ENCODE measurements at regions of chr9 and their contacts with region 1.

Region 1: GRCh38 chr9:4679268-4680172 is at the start of gene CDC37L1:
- DNase-seq: peak; percentile 97 to 99 (median 99)
- H3K4me3 ChIP-seq: peak within 1 kb of the TSS; percentile 72 to 80
- H3K4me3 Mint-ChIP-seq: no peak within 1 kb of the TSS
- H3K27ac ChIP-seq: peak within 1 kb of the TSS; percentile 94
- H3K27ac Mint-ChIP-seq: no peak within 1 kb of the TSS
- H3K4me1 ChIP-seq: peaks cover 36% of the 10 kb centered on the region
- H3K4me1 Mint-ChIP-seq: peaks cover 11 to 16% (median 11%) of the 10 kb centered on the region in 4 donors
- H3K27me3 ChIP-seq: no peaks in the 10 kb centered on the region
- H3K27me3 Mint-ChIP-seq: no peaks in the 10 kb centered on the region
- total RNA-seq, gene CDC37L1: 27.2 to 27.8 TPM

Region 2: GRCh38 chr9:4604678-4605095 is 74.8 kb before region 1 on chr9:
- CTCF ChIA-PET with region 1: interaction called, 3 read pairs
- POLR2A ChIA-PET with region 1: interaction called, 6 read pairs
- intact Hi-C with region 1: loop called (anchors 5 kb)
- DNase-seq: peak; percentile 59 to 72 (median 70)
- H3K4me3 ChIP-seq: no peak overlapping the region
- H3K4me3 Mint-ChIP-seq: peak overlapping the region in 3 of 8 donors; percentile 27 to 67 (median 52)
- H3K27ac ChIP-seq: no peak overlapping the region
- H3K27ac Mint-ChIP-seq: peak overlapping the region in 6 of 7 donors; percentile 4 to 85 (median 57)
- H3K4me1 ChIP-seq: peaks cover 24% of the 10 kb centered on the region
- H3K4me1 Mint-ChIP-seq: peaks cover 21 to 50% (median 25%) of the 10 kb centered on the region in 4 donors
- H3K27me3 ChIP-seq: no peaks in the 10 kb centered on the region
- H3K27me3 Mint-ChIP-seq: no peaks in the 10 kb centered on the region

Region 3: DNA sequence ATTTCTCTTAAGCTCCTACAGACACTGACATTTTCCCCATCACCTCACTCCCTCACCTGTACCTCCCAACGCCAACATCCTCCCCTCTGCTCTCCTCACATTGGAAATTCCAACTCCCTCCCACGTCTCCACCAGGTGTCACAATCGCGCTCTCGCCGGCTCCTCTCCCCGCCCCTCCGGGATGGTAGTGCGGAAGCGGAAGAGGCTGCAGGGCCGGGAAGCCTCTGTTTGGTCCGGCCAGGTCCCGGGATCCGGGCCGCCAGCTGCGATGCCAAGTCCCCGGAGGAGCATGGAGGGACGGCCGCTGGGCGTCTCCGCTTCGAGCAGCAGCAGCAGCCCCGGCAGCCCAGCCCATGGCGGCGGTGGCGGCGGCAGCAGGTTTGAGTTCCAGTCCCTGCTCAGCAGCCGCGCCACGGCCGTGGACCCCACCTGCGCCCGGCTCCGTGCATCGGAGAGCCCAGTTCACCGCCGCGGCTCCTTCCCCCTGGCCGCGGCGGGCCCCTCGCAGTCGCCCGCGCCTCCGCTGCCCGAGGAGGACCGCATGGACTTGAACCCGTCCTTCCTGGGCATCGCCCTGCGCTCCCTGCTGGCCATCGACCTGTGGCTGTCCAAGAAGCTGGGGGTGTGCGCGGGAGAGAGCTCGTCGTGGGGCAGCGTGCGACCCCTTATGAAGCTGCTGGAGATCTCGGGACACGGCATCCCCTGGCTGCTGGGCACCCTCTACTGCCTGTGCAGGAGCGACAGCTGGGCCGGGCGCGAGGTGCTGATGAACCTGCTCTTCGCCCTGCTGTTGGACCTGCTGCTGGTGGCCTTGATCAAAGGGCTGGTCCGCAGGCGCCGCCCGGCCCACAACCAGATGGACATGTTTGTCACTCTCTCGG is 17.2 kb before region 1 on chr9 and contains the start of gene PLPP6:
- CTCF ChIA-PET with region 1: interaction called, 16 read pairs
- POLR2A ChIA-PET with region 1: interaction called, 74 read pairs
- intact Hi-C with region 1: loop called (anchors 1 kb)
- DNase-seq: peak; percentile 70 to 86 (median 76)
- H3K4me3 ChIP-seq: peak within 1 kb of the TSS; percentile 42 to 83
- H3K4me3 Mint-ChIP-seq: peak within 1 kb of the TSS; percentile 91 to 99 (median 96)
- H3K27ac ChIP-seq: peak within 1 kb of the TSS; percentile 67
- H3K27ac Mint-ChIP-seq: peak within 1 kb of the TSS; percentile 95 to 99 (median 96)
- H3K4me1 ChIP-seq: peaks cover 58% of the 10 kb centered on the region
- H3K4me1 Mint-ChIP-seq: peaks cover 47 to 78% (median 59%) of the 10 kb centered on the region in 4 donors
- H3K27me3 ChIP-seq: no peaks in the 10 kb centered on the region
- H3K27me3 Mint-ChIP-seq: no peaks in the 10 kb centered on the region
- total RNA-seq, gene PLPP6: 23.3 to 23.8 TPM

Region 4: GRCh38 chr9:4667681-4668080 is 11.8 kb before region 1 on chr9:
- CTCF ChIA-PET with region 1: interaction called, 16 read pairs
- POLR2A ChIA-PET with region 1: interaction called, 74 read pairs
- intact Hi-C with region 1: loop called (anchors 1 kb)
- DNase-seq: peak; percentile 48 to 57 (median 49)
- H3K4me3 ChIP-seq: no peak overlapping the region
- H3K4me3 Mint-ChIP-seq: peak overlapping the region in 7 of 8 donors; percentile 0 to 72 (median 23)
- H3K27ac ChIP-seq: no peak overlapping the region
- H3K27ac Mint-ChIP-seq: peak overlapping the region; percentile 5 to 81 (median 41)
- H3K4me1 ChIP-seq: peaks cover 60% of the 10 kb centered on the region
- H3K4me1 Mint-ChIP-seq: peaks cover 52 to 61% (median 59%) of the 10 kb centered on the region in 4 donors
- H3K27me3 ChIP-seq: no peaks in the 10 kb centered on the region
- H3K27me3 Mint-ChIP-seq: peaks cover 0 to 1% of the 10 kb centered on the region in 2 donors

Region 5: GRCh38 chr9:4740638-4741364 is 61.3 kb after region 1 on chr9 and contains the start of gene AK3:
- CTCF ChIA-PET with region 1: interaction called, 4 read pairs
- POLR2A ChIA-PET with region 1: interaction called, 44 read pairs
- intact Hi-C with region 1: loop called (anchors 1 kb)
- DNase-seq: peak; percentile 82 to 87 (median 84)
- H3K4me3 ChIP-seq: peak within 1 kb of the TSS; percentile 79 to 84
- H3K4me3 Mint-ChIP-seq: peak within 1 kb of the TSS; percentile 91 to 97 (median 94)
- H3K27ac ChIP-seq: peak within 1 kb of the TSS; percentile 78
- H3K27ac Mint-ChIP-seq: peak within 1 kb of the TSS; percentile 65 to 96 (median 94)
- H3K4me1 ChIP-seq: peaks cover 29% of the 10 kb centered on the region
- H3K4me1 Mint-ChIP-seq: peaks cover 20 to 44% (median 32%) of the 10 kb centered on the region in 4 donors
- H3K27me3 ChIP-seq: no peaks in the 10 kb centered on the region
- H3K27me3 Mint-ChIP-seq: no peaks in the 10 kb centered on the region
- total RNA-seq, gene AK3: 23.1 to 25.2 TPM

Region 6: DNA sequence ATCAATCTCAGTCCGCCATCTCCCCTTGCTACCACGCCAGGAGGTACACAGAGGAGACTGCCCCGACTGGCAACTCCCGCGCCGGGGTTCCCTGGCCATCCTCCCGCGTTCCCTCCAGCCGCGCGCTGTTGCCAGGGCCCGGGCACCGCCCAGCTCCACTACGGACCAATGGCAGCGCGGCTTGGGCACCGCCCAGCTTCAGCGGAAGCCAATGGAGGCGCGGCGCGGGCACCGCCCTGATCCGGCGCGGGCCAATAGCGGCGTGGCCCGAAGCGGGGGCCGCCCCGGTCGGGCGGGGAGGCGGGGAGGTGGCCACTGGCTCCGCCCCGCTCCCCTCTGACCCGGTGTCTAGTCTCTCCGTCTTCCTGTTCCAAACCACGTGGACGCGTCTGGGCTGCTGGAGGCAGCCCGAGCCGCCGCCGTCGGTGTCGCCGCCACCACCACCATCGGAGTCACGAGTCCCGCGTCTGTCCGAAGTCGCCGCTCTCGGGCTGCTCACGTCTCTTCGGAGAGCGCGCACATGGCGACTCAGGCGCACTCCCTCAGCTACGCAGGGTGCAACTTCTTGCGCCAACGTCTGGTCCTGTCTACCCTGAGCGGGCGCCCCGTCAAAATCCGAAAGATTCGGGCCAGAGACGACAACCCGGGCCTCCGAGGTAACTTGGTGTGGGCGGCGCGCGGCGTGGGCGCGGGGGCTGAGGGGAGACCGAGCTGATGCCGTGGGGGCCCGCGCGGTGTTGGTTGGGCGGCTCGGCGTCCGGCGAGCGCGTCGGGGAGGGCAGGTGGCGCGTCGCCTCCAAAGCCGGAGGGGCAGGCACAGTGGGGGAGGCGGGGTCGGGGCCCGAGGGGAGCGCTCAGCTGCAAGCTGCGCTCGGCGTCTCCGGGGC is 113.3 kb after region 1 on chr9 and contains the start of gene RCL1:
- CTCF ChIA-PET with region 1: interaction called, 3 read pairs
- POLR2A ChIA-PET with region 1: interaction called, 21 read pairs
- intact Hi-C with region 1: loop called (anchors 1 kb)
- DNase-seq: peak; percentile 95 to 98 (median 97)
- H3K4me3 ChIP-seq: peak within 1 kb of the TSS; percentile 83 to 88
- H3K4me3 Mint-ChIP-seq: peak within 1 kb of the TSS; percentile 93 to 97 (median 95)
- H3K27ac ChIP-seq: peak within 1 kb of the TSS; percentile 70
- H3K27ac Mint-ChIP-seq: peak within 1 kb of the TSS; percentile 84 to 97 (median 96)
- H3K4me1 ChIP-seq: peaks cover 23% of the 10 kb centered on the region
- H3K4me1 Mint-ChIP-seq: peaks cover 29 to 52% (median 38%) of the 10 kb centered on the region in 4 donors
- H3K27me3 ChIP-seq: no peaks in the 10 kb centered on the region
- H3K27me3 Mint-ChIP-seq: peaks cover 0 to 4% of the 10 kb centered on the region in 2 donors
- total RNA-seq, gene RCL1: 15.2 to 17.8 TPM

Region 7: GRCh38 chr9:5002811-5003210 is 323.3 kb after region 1 on chr9:
- CTCF ChIA-PET with region 1: no interaction called
- POLR2A ChIA-PET with region 1: no interaction called
- intact Hi-C with region 1: no loop called
- DNase-seq: no peak
- H3K4me3 ChIP-seq: no peak overlapping the region
- H3K4me3 Mint-ChIP-seq: no peak overlapping the region
- H3K27ac ChIP-seq: no peak overlapping the region
- H3K27ac Mint-ChIP-seq: no peak overlapping the region
- H3K4me1 ChIP-seq: no peaks in the 10 kb centered on the region
- H3K4me1 Mint-ChIP-seq: peaks cover 9 to 14% (median 11%) of the 10 kb centered on the region in 4 donors
- H3K27me3 ChIP-seq: no peaks in the 10 kb centered on the region
- H3K27me3 Mint-ChIP-seq: no peaks in the 10 kb centered on the region

Region 8: DNA sequence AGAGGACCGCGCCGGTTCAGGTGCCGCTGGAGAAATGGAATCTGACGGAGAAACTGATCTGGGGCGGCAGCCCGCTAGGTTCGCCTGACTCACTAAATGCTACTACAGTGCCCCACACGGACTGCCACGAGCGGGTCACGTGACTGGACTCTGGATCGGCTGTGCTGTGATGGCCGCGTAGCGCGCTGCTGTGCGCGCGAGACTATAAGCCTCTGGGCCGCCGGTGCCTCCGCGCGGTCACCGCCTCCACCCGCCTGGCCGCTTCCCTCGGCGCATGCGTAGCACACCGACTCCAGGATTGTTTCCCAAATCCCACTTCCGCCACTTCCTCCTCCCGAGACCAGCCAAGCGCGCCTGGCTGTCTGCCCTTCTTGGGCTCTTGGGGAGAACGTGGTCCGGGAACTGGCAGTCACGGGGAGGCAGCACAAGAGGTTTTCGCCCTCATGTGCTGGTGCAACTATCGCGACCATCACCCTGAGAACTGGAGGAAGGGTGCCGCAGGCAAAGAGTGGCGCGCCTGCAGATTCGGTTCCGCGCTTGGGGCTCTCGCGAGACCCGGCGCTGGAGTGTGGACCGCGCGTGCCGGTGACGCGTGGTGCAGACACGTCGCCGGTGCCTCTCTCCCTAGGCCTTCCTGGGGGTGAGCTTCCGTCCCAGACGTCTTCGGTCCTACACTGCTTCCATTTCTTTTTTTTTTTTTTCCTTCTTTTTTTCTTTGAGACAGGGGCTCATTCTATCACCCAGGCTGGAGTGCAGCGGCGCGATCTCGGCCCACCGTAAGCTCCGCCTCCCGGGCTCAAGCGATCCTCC is 2001.8 kb after region 1 on chr9:
- CTCF ChIA-PET with region 1: no interaction called
- POLR2A ChIA-PET with region 1: no interaction called
- intact Hi-C with region 1: loop called (anchors 10 kb)
- DNase-seq: peak; percentile 92 to 96 (median 94)
- H3K4me3 ChIP-seq: peak overlapping the region; percentile 91 to 99
- H3K4me3 Mint-ChIP-seq: peak overlapping the region; percentile 93 to 97 (median 95)
- H3K27ac ChIP-seq: peak overlapping the region; percentile 82
- H3K27ac Mint-ChIP-seq: peak overlapping the region; percentile 94 to 100 (median 99)
- H3K4me1 ChIP-seq: peaks cover 23% of the 10 kb centered on the region
- H3K4me1 Mint-ChIP-seq: peaks cover 14 to 34% (median 22%) of the 10 kb centered on the region in 4 donors
- H3K27me3 ChIP-seq: no peaks in the 10 kb centered on the region
- H3K27me3 Mint-ChIP-seq: no peaks in the 10 kb centered on the region

Measured in CD4-positive, alpha-beta memory T cell (primary cell).